PC-9 (cell line): ENCODE measurements at regions of chr1 and their contacts with region 1.

Region 1: GRCh38 chr1:20913242-20913641 is 126.1 kb upstream of the HP1BP3 start:
- DNase-seq: no peak
- H3K4me3 ChIP-seq: no peak overlapping the region
- H3K27ac ChIP-seq: no peak overlapping the region
- H3K4me1 ChIP-seq: no peaks in the 10 kb centered on the region
- H3K27me3 ChIP-seq: no peaks in the 10 kb centered on the region
- CTCF ChIP-seq: no peak

Region 2: DNA sequence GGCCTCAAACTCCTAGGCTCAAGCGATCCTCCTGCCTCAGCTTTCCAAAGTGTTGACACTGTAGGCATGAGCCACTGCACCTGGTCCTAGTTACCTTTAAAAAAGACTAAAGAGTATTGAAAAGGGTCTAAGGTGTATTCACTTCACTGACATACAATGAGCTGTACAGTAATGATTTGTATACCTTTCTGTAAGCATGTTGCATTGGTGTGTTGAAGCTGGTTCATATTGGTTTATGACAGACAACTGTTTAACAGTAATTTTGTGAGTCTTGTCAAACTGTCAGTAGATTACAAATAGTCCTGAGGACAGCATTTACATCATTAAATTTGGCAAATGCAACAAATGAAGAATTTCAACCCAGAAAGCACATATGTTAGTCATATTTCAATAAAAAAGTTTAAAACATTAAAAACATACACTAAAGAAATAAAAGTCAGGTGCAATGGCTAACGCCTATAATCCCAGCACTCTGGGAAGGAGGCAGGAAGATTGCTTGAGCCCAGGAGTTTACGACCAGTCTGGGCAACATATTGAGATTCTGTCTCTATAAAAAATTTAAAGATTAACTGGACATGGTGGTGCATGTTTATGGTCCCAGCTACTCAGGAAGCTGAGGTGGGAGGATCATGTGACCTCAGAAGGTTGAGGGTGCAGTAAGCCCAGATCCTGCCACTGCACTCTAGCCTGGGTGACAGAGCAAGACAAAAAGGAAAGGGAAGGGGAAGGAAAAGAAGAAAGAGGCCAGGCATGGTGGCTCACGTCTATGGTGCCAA is 37.9 kb before region 1 on chr1:
- CTCF ChIA-PET with region 1: interaction called, 5 read pairs
- POLR2A ChIA-PET with region 1: interaction called, 17 read pairs
- intact Hi-C with region 1: no loop called
- DNase-seq: no peak
- H3K4me3 ChIP-seq: no peak overlapping the region
- H3K27ac ChIP-seq: no peak overlapping the region
- H3K4me1 ChIP-seq: no peaks in the 10 kb centered on the region
- H3K27me3 ChIP-seq: no peaks in the 10 kb centered on the region
- CTCF ChIP-seq: no peak

Region 3: GRCh38 chr1:20932437-20932977 is 19.3 kb after region 1 on chr1:
- CTCF ChIA-PET with region 1: no interaction called
- POLR2A ChIA-PET with region 1: no interaction called
- intact Hi-C with region 1: no loop called
- DNase-seq: no peak
- H3K4me3 ChIP-seq: no peak overlapping the region
- H3K27ac ChIP-seq: no peak overlapping the region
- H3K4me1 ChIP-seq: no peaks in the 10 kb centered on the region
- H3K27me3 ChIP-seq: no peaks in the 10 kb centered on the region
- CTCF ChIP-seq: no peak